Right ventricle myocardium superior (tissue), 1 donor: ENCODE measurements at regions of chr19 and their contacts with region 1.

Region 1: GRCh38 chr19:32287811-32288227 is 57.6 kb upstream of the ZNF507 start:
- DNase-seq: peak; percentile 89
- ATAC-seq: peak; percentile 94

Region 2: DNA sequence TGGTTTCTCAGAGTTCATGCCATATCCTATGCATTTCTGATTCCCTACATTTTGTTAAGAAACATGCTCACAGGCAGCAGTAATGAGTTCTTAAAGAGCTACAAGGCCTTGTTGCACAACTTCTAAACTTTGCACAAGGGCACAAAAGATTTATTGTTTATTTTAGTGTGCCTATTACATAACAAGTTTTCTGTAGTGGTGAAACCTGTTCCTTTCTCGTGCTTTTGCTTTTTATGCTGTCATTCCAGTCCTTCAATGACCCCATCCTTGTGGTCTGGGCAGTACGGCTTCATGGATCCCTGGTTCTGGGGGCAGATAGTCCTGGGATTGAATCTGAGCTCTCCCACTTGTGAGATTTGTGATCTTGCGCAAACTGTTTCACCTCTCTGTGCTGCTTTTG is 75.4 kb after region 1 on chr19:
- intact Hi-C with region 1: no loop called
- DNase-seq: no peak
- ATAC-seq: peak; percentile 73

Region 3: GRCh38 chr19:32570081-32570785 is 282.4 kb after region 1 on chr19:
- intact Hi-C with region 1: loop called (anchors 5 kb)
- DNase-seq: no peak
- ATAC-seq: peak; percentile 73